Panc1 (cell line): ENCODE measurements at regions of chr1 and their contacts with region 1.

Region 1: DNA sequence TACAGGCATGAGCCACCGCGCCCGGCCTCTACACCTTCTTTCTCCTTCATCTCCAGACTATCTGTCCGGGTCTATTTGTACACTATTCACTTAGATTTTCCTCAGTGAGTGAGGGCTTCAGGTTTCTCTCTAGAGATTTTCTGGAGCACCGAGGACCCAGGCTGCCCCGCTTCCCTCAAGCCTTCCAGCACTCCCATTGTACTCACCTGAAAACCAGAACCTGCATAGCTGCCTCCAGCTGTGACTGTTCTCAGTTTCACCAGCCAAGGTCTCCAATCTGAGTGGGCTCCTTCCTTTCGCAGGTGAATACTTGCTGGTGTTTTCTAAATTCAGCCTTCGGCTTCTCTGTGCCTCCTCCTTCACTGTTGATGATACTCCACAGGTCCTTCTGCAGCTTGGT is 12.9 kb upstream of the DMAP1 start:
- DNase-seq: no peak
- ATAC-seq: no peak
- H3K4me3 ChIP-seq: no peak overlapping the region
- H3K27ac ChIP-seq: no peak overlapping the region
- H3K4me1 ChIP-seq: no peaks in the 10 kb centered on the region
- H3K27me3 ChIP-seq: no peaks in the 10 kb centered on the region
- CTCF ChIP-seq: no peak

Region 2: GRCh38 chr1:43912607-43913006 is 287.7 kb before region 1 on chr1:
- CTCF ChIA-PET with region 1: no interaction called
- POLR2A ChIA-PET with region 1: no interaction called
- in situ Hi-C with region 1: no loop called
- intact Hi-C with region 1: no loop called
- DNase-seq: no peak
- ATAC-seq: peak; percentile 42; the same call in 1 of the 2 replicates
- H3K4me3 ChIP-seq: no peak overlapping the region
- H3K27ac ChIP-seq: no peak overlapping the region
- H3K4me1 ChIP-seq: no peaks in the 10 kb centered on the region
- H3K27me3 ChIP-seq: no peaks in the 10 kb centered on the region
- CTCF ChIP-seq: no peak

Region 3: DNA sequence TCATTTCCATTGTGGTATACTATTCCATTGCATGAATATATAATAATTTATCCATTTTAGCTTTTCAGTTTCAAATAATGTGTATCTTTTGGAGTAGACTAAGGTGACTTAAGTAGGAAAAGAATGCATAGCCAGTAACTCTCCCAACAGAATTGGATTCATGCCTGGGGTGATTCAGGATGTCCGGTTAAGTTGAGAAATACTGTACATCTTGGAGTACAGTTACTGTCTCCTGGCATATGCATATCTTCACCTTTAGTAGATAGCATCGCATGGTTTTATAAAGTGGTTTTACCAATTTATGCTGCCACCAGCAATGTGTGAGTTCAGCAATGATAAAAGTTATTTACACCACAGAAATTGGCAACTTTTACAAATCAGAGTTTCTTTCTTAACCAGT is 150.5 kb before region 1 on chr1:
- CTCF ChIA-PET with region 1: no interaction called
- POLR2A ChIA-PET with region 1: no interaction called
- in situ Hi-C with region 1: no loop called
- intact Hi-C with region 1: no loop called
- DNase-seq: peak; percentile 82
- ATAC-seq: 0 out of 2 replicates have a peak, but pooled peaks have one; percentile 10
- H3K4me3 ChIP-seq: no peak overlapping the region
- H3K27ac ChIP-seq: peak overlapping the region; percentile 13; the same call in 1 of the 2 replicates
- H3K4me1 ChIP-seq: peaks cover 10% of the 10 kb centered on the region
- H3K27me3 ChIP-seq: no peaks in the 10 kb centered on the region
- CTCF ChIP-seq: no peak

Region 4: DNA sequence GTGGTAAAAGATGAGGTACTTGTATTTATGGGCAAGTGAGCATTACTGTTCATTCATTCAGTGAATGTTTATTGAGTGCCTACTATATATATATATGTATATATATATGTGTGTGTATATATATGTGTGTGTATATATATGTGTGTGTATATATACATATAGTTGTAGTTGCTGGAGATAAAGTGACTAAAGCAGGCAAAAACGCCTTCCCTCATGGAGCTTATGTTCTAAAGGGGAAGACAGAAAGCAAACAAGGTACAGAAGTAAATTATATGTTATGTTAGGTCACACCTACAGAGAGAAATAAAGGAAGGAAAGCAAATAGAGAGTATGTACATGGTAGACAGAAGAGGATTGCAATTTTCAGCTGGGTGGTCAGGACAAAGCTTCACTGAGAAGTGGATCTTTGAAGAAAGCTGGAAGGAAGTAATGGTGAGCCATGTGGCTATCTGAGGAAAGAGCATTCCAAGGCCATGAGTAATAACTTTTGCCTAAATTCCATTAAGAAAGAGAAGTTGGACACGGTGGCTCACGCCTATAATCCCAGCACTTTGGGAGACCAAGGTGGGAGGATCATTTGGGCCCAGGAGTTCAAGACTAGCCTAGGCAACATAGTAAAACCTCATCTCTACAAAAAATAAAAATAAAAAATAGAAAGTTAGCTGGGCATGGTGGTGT is 115.2 kb before region 1 on chr1:
- CTCF ChIA-PET with region 1: interaction called, 3 read pairs
- POLR2A ChIA-PET with region 1: no interaction called
- in situ Hi-C with region 1: no loop called
- intact Hi-C with region 1: loop called (anchors 10 kb)
- DNase-seq: peak; percentile 15
- ATAC-seq: peak; percentile 69
- H3K4me3 ChIP-seq: no peak overlapping the region
- H3K27ac ChIP-seq: no peak overlapping the region
- H3K4me1 ChIP-seq: no peaks in the 10 kb centered on the region
- H3K27me3 ChIP-seq: no peaks in the 10 kb centered on the region; the same call in 1 of the 2 replicates
- CTCF ChIP-seq: no peak